CD4-positive, alpha-beta T cell (primary cell): ENCODE measurements at regions of chr10 and their contacts with region 1.

Region 1: GRCh38 chr10:129466703-129467358 is at the start of gene MGMT:
- DNase-seq: peak; percentile 95 to 100 (median 99)
- ATAC-seq: peak; percentile 98
- H3K4me3 ChIP-seq: peak within 1 kb of the TSS; percentile 78
- H3K4me3 Mint-ChIP-seq: peak within 1 kb of the TSS; percentile 93
- H3K27ac ChIP-seq: peak within 1 kb of the TSS; percentile 58
- H3K27ac Mint-ChIP-seq: peak within 1 kb of the TSS; percentile 90
- H3K4me1 ChIP-seq: peaks cover 21% of the 10 kb centered on the region
- H3K4me1 Mint-ChIP-seq: peaks cover 22% of the 10 kb centered on the region
- H3K27me3 ChIP-seq: no peaks in the 10 kb centered on the region
- H3K27me3 Mint-ChIP-seq: no peaks in the 10 kb centered on the region
- CTCF ChIP-seq: no peak
- total RNA-seq, gene MGMT: 9.0 to 9.6 TPM

Region 2: GRCh38 chr10:128125944-128126764 is 1340.7 kb before region 1 on chr10 and contains the start of gene MKI67:
- CTCF ChIA-PET with region 1: no interaction called
- POLR2A ChIA-PET with region 1: no interaction called
- intact Hi-C with region 1: loop called in 1 of 2 experiments (anchors 10 kb)
- DNase-seq: peak; percentile 81 to 96 (median 84)
- ATAC-seq: peak; percentile 93
- H3K4me3 ChIP-seq: peak within 1 kb of the TSS; percentile 61
- H3K4me3 Mint-ChIP-seq: peak within 1 kb of the TSS; percentile 91
- H3K27ac ChIP-seq: no peak within 1 kb of the TSS
- H3K27ac Mint-ChIP-seq: peak within 1 kb of the TSS; percentile 16
- H3K4me1 ChIP-seq: peaks cover 20% of the 10 kb centered on the region
- H3K4me1 Mint-ChIP-seq: peaks cover 28% of the 10 kb centered on the region
- H3K27me3 ChIP-seq: peaks cover 16 to 28% of the 10 kb centered on the region in 2 experiments
- H3K27me3 Mint-ChIP-seq: peaks cover 41% of the 10 kb centered on the region
- CTCF ChIP-seq: no peak
- total RNA-seq, gene MKI67: 0.92 to 1.2 TPM

Region 3: GRCh38 chr10:129963641-129964501 is 497.0 kb after region 1 on chr10 and contains the start of gene EBF3:
- CTCF ChIA-PET with region 1: no interaction called
- POLR2A ChIA-PET with region 1: no interaction called
- intact Hi-C with region 1: loop called in 1 of 2 experiments (anchors 10 kb)
- DNase-seq: peak in 9 of 14 experiments; percentile 14 to 77 (median 46)
- ATAC-seq: peak; percentile 73
- H3K4me3 ChIP-seq: peak within 1 kb of the TSS; percentile 30
- H3K4me3 Mint-ChIP-seq: peak within 1 kb of the TSS; percentile 85
- H3K27ac ChIP-seq: no peak within 1 kb of the TSS
- H3K27ac Mint-ChIP-seq: no peak within 1 kb of the TSS
- H3K4me1 ChIP-seq: peaks cover 33% of the 10 kb centered on the region
- H3K4me1 Mint-ChIP-seq: peaks cover 32% of the 10 kb centered on the region
- H3K27me3 ChIP-seq: peaks cover 69 to 87% of the 10 kb centered on the region in 2 experiments
- H3K27me3 Mint-ChIP-seq: peaks cover 72% of the 10 kb centered on the region
- CTCF ChIP-seq: no peak
- total RNA-seq, gene EBF3: not detected

Region 4: GRCh38 chr10:130136226-130137089 is 669.6 kb after region 1 on chr10 and contains the start of gene GLRX3:
- CTCF ChIA-PET with region 1: no interaction called
- POLR2A ChIA-PET with region 1: no interaction called
- intact Hi-C with region 1: loop called in 1 of 2 experiments (anchors 2 kb)
- DNase-seq: peak; percentile 77 to 95 (median 86)
- ATAC-seq: peak; percentile 94
- H3K4me3 ChIP-seq: peak within 1 kb of the TSS; percentile 68
- H3K4me3 Mint-ChIP-seq: peak within 1 kb of the TSS; percentile 96
- H3K27ac ChIP-seq: peak within 1 kb of the TSS; percentile 18 to 70
- H3K27ac Mint-ChIP-seq: peak within 1 kb of the TSS; percentile 80
- H3K4me1 ChIP-seq: peaks cover 38% of the 10 kb centered on the region
- H3K4me1 Mint-ChIP-seq: peaks cover 35% of the 10 kb centered on the region
- H3K27me3 ChIP-seq: no peaks in the 10 kb centered on the region
- H3K27me3 Mint-ChIP-seq: peaks cover 7% of the 10 kb centered on the region
- CTCF ChIP-seq: no peak
- total RNA-seq, gene GLRX3: 25.4 to 29.7 TPM

Region 5: DNA sequence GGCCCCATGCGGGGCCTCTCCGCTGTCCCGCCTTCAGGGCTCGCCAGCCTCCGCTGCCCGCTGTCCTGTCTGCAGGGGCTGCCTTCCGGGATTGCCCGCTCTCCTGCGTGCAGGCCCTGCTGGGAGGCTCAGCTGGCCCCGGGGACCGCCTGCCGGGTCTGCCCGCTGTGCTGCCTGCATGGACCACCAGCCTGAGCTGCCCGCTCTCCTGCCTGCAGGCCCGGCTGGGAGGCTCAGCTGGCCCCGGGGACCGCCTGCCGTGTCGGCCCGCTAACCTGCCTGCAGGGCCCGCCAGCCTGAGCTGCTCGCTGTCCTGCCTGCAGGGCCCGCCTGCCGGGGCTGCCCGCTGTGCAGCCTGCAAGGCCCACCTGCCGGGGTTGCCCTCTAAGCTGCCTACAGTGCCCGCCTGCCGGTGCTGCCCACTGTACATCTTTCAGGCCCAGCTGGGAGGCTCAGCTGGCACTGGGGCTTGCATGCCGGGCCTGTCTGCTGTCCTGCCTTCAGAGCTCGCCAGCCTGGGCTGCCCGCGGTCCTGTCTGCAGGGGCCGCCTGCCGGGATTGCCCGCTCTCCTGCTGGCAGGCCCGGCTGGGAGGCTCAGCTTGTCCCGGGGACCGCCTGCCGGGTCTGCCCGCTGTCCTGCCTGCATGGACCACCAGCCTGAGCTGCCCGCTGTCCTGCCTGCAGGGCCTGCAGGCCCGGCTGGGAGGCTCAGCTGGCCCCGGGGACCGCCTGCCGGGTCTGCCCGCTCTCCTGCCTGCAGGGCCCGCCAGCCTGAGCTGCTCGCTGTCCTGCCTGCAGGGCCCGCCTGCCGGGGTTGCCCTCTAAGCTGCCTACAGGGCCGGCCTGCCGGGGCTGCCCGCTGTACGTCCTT is 834.4 kb after region 1 on chr10:
- CTCF ChIA-PET with region 1: no interaction called
- POLR2A ChIA-PET with region 1: interaction called, 12 read pairs
- intact Hi-C with region 1: loop called in 1 of 2 experiments (anchors 2 kb)
- DNase-seq: peak; percentile 8 to 73 (median 50)
- ATAC-seq: peak; percentile 69
- H3K4me3 ChIP-seq: peak overlapping the region; percentile 31
- H3K4me3 Mint-ChIP-seq: peak overlapping the region; percentile 93
- H3K27ac ChIP-seq: peak overlapping the region in 1 of 2 donors; percentile 13
- H3K27ac Mint-ChIP-seq: peak overlapping the region; percentile 94
- H3K4me1 ChIP-seq: no peaks in the 10 kb centered on the region
- H3K4me1 Mint-ChIP-seq: peaks cover 18% of the 10 kb centered on the region
- H3K27me3 ChIP-seq: no peaks in the 10 kb centered on the region
- H3K27me3 Mint-ChIP-seq: no peaks in the 10 kb centered on the region
- CTCF ChIP-seq: no peak